Activated CD8-positive, alpha-beta T cell treated with anti-CD3 and anti-CD28 coated beads, Interleukin-2, amount 10 ng/mL, durations not matched to agents 7 days and 5 days (primary cell): ENCODE measurements at regions of chr6 and their contacts with region 1.

Region 1: DNA sequence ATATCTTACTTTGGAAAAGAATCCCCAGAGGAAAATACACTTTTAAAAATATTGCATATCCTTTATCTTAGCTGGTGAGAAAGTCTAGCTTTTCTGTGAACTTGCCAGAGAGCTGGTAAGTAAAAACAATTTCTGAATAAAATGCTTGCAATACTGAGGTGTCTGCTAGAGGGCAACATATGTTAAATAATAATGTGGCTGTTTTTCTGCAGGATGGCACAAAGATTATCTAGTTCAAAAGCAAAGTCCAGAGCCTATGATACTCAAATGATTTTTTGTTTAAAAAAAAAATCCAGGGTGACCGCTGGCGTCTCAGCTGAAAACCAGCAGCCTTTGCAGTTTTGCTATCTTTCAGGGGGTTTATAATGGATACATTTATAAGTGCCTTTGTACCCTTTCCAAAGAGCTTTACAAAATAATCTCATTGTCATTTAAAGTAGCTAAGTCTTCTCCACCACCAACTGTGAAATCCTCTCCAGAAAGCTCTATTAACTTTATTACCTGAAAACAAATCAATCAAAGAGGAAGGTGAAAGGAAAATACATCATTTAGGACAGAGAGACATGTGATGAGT is 194.9 kb downstream of the PHACTR1 start:
- DNase-seq: no peak
- ATAC-seq: no peak
- H3K4me3 Mint-ChIP-seq: no peak overlapping the region
- H3K27ac Mint-ChIP-seq: no peak overlapping the region
- H3K4me1 Mint-ChIP-seq: no peaks in the 10 kb centered on the region
- H3K27me3 Mint-ChIP-seq: peaks cover 19% of the 10 kb centered on the region

Region 2: GRCh38 chr6:12899046-12899833 is 12.2 kb before region 1 on chr6:
- CTCF ChIA-PET with region 1: interaction called, 15 read pairs
- POLR2A ChIA-PET with region 1: no interaction called
- DNase-seq: no peak
- ATAC-seq: no peak
- H3K4me3 Mint-ChIP-seq: no peak overlapping the region
- H3K27ac Mint-ChIP-seq: no peak overlapping the region
- H3K4me1 Mint-ChIP-seq: no peaks in the 10 kb centered on the region
- H3K27me3 Mint-ChIP-seq: peaks cover 20% of the 10 kb centered on the region

Region 3: GRCh38 chr6:12929678-12930077 is 18.2 kb after region 1 on chr6:
- CTCF ChIA-PET with region 1: no interaction called
- POLR2A ChIA-PET with region 1: no interaction called
- DNase-seq: no peak
- ATAC-seq: no peak
- H3K4me3 Mint-ChIP-seq: no peak overlapping the region
- H3K27ac Mint-ChIP-seq: no peak overlapping the region
- H3K4me1 Mint-ChIP-seq: no peaks in the 10 kb centered on the region
- H3K27me3 Mint-ChIP-seq: peaks cover 24% of the 10 kb centered on the region

Region 4: GRCh38 chr6:13277836-13278563 is 366.5 kb after region 1 on chr6:
- CTCF ChIA-PET with region 1: interaction called, 10 read pairs
- POLR2A ChIA-PET with region 1: no interaction called
- DNase-seq: peak; percentile 29
- ATAC-seq: no peak
- H3K4me3 Mint-ChIP-seq: no peak overlapping the region
- H3K27ac Mint-ChIP-seq: no peak overlapping the region
- H3K4me1 Mint-ChIP-seq: peaks cover 55% of the 10 kb centered on the region
- H3K27me3 Mint-ChIP-seq: peaks cover 6% of the 10 kb centered on the region

Region 5: DNA sequence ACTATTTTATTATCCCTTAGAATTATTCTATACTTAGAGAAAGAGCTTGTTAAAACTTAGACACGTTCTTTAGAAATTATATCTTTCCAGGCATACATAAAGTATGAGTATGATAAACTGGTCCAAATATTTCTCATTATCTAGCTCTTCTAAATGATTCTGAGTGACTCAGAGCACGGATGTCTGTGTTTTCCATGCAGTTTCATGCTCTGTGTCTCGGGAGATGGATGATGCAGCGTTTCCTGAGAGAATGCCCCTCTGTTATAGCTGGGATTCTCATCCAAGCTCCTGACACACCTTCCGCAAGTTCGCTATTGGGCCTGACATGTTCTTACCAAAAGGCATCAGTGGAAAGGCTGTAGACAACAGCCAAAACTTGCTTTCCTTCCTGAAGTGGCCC is 682.2 kb after region 1 on chr6:
- CTCF ChIA-PET with region 1: no interaction called
- POLR2A ChIA-PET with region 1: no interaction called
- DNase-seq: no peak
- ATAC-seq: no peak
- H3K4me3 Mint-ChIP-seq: no peak overlapping the region
- H3K27ac Mint-ChIP-seq: peak overlapping the region; percentile 19
- H3K4me1 Mint-ChIP-seq: no peaks in the 10 kb centered on the region
- H3K27me3 Mint-ChIP-seq: no peaks in the 10 kb centered on the region